ENCODE measurements at regions of chr16 and their contacts with region 1.

Region 1: GRCh38 chr16:53457670-53458069 is 23.4 kb downstream of the RBL2 start:
- DNase-seq: peak; percentile 86
- H3K4me3 Mint-ChIP-seq: peak overlapping the region; percentile 78
- H3K27ac Mint-ChIP-seq: peak overlapping the region; percentile 93
- H3K4me1 Mint-ChIP-seq: peaks cover 85% of the 10 kb centered on the region
- H3K27me3 Mint-ChIP-seq: no peaks in the 10 kb centered on the region

Region 2: DNA sequence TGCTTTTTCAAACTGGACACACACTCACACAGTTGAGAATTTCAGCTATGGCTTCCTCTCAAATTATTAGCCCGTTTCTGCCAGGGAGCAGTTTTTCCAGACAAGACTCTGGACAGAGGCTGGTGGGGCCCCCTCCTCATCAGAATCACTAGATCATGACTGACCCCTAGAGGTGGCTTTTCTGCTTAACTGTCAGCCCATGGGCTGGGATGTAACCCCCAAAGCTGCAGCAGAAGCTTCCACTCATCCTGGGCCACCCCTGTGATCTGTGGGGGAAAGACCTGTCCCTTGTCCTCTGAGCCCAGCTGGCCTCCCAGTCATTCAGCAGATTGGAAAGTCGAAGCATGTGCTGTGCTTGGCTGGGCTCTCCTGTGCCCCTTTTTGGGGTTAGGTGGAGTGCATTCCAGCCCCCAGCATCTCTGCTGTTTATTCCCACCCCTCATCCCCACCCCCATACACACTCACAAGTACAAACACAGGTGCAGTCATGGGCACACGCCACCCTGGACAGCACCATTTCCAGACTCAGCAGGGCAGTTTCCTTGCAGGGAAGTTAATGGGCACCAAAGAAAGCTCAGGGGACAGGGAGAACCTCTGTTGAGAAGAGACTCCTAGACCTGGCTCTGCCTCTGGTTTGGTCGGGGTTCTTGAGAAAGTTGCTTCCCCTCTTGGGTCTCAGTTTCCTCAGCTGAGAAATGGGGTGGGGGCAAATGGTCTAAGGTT is 101.0 kb before region 1 on chr16:
- CTCF ChIA-PET with region 1: no interaction called
- POLR2A ChIA-PET with region 1: no interaction called
- DNase-seq: no peak
- H3K4me3 Mint-ChIP-seq: no peak overlapping the region
- H3K27ac Mint-ChIP-seq: no peak overlapping the region
- H3K4me1 Mint-ChIP-seq: peaks cover 3% of the 10 kb centered on the region
- H3K27me3 Mint-ChIP-seq: no peaks in the 10 kb centered on the region

Region 3: GRCh38 chr16:53404959-53405358 is 52.7 kb before region 1 on chr16:
- CTCF ChIA-PET with region 1: no interaction called
- POLR2A ChIA-PET with region 1: no interaction called
- DNase-seq: no peak
- H3K4me3 Mint-ChIP-seq: no peak overlapping the region
- H3K27ac Mint-ChIP-seq: no peak overlapping the region
- H3K4me1 Mint-ChIP-seq: no peaks in the 10 kb centered on the region
- H3K27me3 Mint-ChIP-seq: no peaks in the 10 kb centered on the region

Region 4: DNA sequence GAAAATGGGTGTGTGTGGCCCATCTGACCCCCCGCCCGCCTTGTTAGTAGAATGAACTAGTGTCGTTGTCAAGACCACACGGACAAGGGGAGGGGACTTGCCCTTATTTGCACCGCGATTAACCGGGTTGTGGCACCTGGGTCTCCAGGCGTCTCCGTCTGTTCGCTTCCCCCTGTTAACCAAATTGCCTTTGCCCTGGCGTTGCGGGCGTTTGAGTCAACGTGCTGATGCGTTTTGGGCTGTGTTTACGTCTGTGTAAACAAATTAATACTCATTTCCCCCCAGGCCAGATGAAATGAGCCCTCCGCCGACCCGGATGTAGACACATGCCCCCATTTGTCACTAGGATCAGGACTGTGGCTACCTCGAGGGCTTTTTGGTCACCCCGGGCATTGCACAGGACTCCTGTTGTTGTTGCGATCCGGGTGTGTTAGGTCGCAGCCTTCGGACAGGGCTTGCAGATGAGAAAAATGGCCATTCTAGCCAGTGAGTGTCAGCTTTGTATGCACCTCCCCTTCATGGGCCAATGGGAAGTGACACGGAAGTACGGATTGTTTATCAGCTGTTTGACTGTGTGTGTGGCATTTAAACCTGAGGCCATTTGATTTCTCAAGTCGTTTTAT is 22.5 kb before region 1 on chr16:
- CTCF ChIA-PET with region 1: interaction called, 21 read pairs
- POLR2A ChIA-PET with region 1: interaction called, 282 read pairs
- DNase-seq: peak; percentile 70
- H3K4me3 Mint-ChIP-seq: peak overlapping the region; percentile 97
- H3K27ac Mint-ChIP-seq: peak overlapping the region; percentile 91
- H3K4me1 Mint-ChIP-seq: peaks cover 41% of the 10 kb centered on the region
- H3K27me3 Mint-ChIP-seq: peaks cover 2% of the 10 kb centered on the region

Region 5: GRCh38 chr16:53478965-53479364 is 21.3 kb after region 1 on chr16:
- CTCF ChIA-PET with region 1: interaction called, 3 read pairs
- POLR2A ChIA-PET with region 1: interaction called, 17 read pairs
- DNase-seq: no peak
- H3K4me3 Mint-ChIP-seq: no peak overlapping the region
- H3K27ac Mint-ChIP-seq: no peak overlapping the region
- H3K4me1 Mint-ChIP-seq: peaks cover 30% of the 10 kb centered on the region
- H3K27me3 Mint-ChIP-seq: no peaks in the 10 kb centered on the region

Region 6: DNA sequence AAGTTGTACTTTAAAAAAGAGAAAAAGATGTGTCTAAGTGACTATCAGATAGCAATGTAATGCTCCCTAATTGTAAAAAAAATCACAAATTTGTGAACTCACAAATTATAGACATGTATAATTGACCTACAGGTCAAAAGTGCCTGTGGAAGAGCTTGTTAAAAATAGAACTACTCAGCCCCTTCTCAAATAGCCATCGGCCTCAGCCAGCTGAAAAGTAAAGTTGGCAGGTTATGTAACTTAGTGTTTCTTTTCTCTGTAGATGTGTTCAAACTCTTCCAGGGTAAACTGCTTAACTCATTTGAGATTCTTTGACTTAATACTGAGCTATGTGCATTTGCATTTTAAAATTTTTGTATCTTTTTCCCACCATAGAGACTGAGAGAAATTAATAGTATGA is 32.1 kb after region 1 on chr16:
- CTCF ChIA-PET with region 1: no interaction called
- POLR2A ChIA-PET with region 1: interaction called, 10 read pairs
- DNase-seq: no peak
- H3K4me3 Mint-ChIP-seq: no peak overlapping the region
- H3K27ac Mint-ChIP-seq: no peak overlapping the region
- H3K4me1 Mint-ChIP-seq: peaks cover 12% of the 10 kb centered on the region
- H3K27me3 Mint-ChIP-seq: no peaks in the 10 kb centered on the region

Region 7: DNA sequence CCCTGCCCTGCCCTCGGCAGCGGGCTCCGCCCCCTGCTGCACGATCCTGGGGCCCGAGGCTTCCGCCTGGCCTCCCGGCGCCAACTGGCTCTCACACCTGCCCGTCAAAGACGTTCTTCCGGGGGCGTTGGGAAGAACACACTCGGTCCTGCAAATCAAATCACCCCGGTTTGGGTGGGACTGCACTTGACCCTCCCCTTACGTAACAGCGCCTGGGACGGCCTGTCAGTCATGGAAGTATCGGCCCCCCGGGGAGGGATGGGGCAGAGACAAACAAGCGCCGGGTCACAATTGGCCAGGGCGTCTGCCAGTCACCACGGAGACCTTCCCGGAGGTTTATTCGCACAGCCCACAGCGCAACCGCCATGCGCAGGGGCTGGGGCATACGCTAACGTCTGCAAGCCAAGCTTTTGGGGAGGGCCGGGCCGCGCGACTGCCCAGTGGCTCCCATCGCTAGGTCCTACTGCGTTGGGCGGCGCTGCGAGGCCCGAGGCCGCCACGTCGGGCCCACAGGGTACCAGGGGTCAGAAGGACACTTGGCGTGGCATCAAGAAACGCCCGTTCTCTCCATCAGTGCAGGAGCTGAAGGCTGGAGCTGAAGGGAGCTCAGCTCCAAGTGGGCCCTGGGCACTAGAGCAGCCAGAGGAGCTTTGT is 45.7 kb after region 1 on chr16:
- CTCF ChIA-PET with region 1: interaction called, 3 read pairs
- POLR2A ChIA-PET with region 1: interaction called, 90 read pairs
- DNase-seq: peak; percentile 100
- H3K4me3 Mint-ChIP-seq: peak overlapping the region; percentile 80
- H3K27ac Mint-ChIP-seq: peak overlapping the region; percentile 90
- H3K4me1 Mint-ChIP-seq: peaks cover 59% of the 10 kb centered on the region
- H3K27me3 Mint-ChIP-seq: no peaks in the 10 kb centered on the region

Region 8: GRCh38 chr16:53518550-53519416 is 61.1 kb after region 1 on chr16:
- CTCF ChIA-PET with region 1: interaction called, 8 read pairs
- POLR2A ChIA-PET with region 1: interaction called, 28 read pairs
- DNase-seq: peak; percentile 92
- H3K4me3 Mint-ChIP-seq: peak overlapping the region; percentile 66
- H3K27ac Mint-ChIP-seq: peak overlapping the region; percentile 91
- H3K4me1 Mint-ChIP-seq: peaks cover 52% of the 10 kb centered on the region
- H3K27me3 Mint-ChIP-seq: no peaks in the 10 kb centered on the region

Measured in activated CD4-positive, alpha-beta memory T cell treated with anti-CD3 and anti-CD28 coated beads, Interleukin-2, amount 10 ng/mL, durations not matched to agents 7 days and 5 days (primary cell).